ENCODE measurements at regions of chr10 and their contacts with region 1.

Region 1: DNA sequence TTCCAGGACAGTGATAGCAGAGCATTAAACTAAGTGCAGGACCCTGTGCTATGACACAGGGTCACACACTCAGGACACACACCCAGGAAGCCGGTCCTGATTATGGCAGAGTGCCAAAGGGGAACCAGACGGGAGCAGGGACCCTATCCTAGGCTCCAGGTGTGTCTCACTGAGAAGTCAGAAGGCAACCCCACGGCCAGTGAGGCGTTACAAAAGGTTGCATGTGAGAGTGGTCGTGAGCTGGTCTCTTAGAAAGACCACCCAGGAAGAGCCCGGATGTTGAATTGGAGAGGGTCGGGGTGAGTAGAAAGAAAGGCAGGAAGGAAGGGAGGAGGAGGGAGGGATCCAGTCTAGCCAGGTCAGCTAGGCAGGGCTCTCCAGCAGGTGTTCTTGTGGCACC is 31.0 kb downstream of the FRMPD2 start:
- DNase-seq: no peak
- H3K4me3 ChIP-seq: no peak overlapping the region
- H3K27ac ChIP-seq: no peak overlapping the region
- H3K4me1 ChIP-seq: no peaks in the 10 kb centered on the region
- H3K27me3 ChIP-seq: no peaks in the 10 kb centered on the region
- CTCF ChIP-seq: no peak

Region 2: DNA sequence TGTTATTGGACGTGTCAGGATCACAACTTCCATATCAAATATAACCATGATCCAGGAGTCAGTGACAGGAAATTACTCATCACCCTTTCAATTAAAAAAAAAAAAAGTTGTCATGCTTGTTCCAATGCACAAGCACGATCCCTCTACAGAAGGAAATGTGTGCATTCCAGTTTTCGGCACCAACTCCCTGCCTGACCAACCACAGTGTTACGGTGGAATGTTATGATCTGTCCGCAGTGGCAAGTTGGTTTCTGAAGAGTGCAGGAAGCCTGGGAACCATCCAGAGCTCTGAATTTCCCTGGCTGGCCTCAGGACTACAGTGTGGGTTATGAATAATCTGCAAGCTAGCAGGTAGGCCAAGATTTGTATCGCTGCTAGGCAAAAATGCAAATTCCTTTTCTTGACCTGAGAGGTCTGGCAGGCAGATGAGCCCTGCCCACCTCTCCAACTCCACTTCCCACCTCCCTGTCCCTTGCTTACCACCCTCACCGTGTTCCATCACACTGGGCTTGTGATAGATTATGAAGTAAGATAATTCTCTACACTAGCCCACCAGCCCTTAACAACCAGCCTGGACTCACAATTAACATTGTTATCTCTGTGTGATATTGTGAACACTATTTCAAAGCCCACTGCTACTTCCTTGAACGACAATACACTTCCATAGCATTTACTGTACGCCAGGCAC is 10.6 kb after region 1 on chr10:
- CTCF ChIA-PET with region 1: no interaction called
- dilution Hi-C with region 1: no loop called
- in situ Hi-C with region 1: no loop called
- intact Hi-C with region 1: no loop called
- DNase-seq: peak; percentile 97
- H3K4me3 ChIP-seq: no peak overlapping the region
- H3K27ac ChIP-seq: peak overlapping the region; percentile 42
- H3K4me1 ChIP-seq: peaks cover 41% of the 10 kb centered on the region
- H3K27me3 ChIP-seq: no peaks in the 10 kb centered on the region
- CTCF ChIP-seq: no peak

Region 3: GRCh38 chr10:48300556-48300955 is 57.1 kb after region 1 on chr10:
- CTCF ChIA-PET with region 1: no interaction called
- dilution Hi-C with region 1: loop called (anchors 5 kb)
- in situ Hi-C with region 1: no loop called
- intact Hi-C with region 1: no loop called
- DNase-seq: no peak
- H3K4me3 ChIP-seq: no peak overlapping the region
- H3K27ac ChIP-seq: no peak overlapping the region
- H3K4me1 ChIP-seq: no peaks in the 10 kb centered on the region
- H3K27me3 ChIP-seq: peaks cover 2% of the 10 kb centered on the region
- CTCF ChIP-seq: no peak

Region 4: GRCh38 chr10:48463318-48464003 is 220.0 kb after region 1 on chr10:
- CTCF ChIA-PET with region 1: no interaction called
- dilution Hi-C with region 1: no loop called
- in situ Hi-C with region 1: no loop called
- intact Hi-C with region 1: no loop called
- DNase-seq: no peak
- H3K4me3 ChIP-seq: no peak overlapping the region
- H3K27ac ChIP-seq: no peak overlapping the region
- H3K4me1 ChIP-seq: peaks cover 23% of the 10 kb centered on the region
- H3K27me3 ChIP-seq: no peaks in the 10 kb centered on the region
- CTCF ChIP-seq: no peak

Region 5: GRCh38 chr10:48533951-48534720 is 290.6 kb after region 1 on chr10:
- CTCF ChIA-PET with region 1: no interaction called
- dilution Hi-C with region 1: no loop called
- in situ Hi-C with region 1: no loop called
- intact Hi-C with region 1: no loop called
- DNase-seq: no peak
- H3K4me3 ChIP-seq: no peak overlapping the region
- H3K27ac ChIP-seq: no peak overlapping the region
- H3K4me1 ChIP-seq: no peaks in the 10 kb centered on the region
- H3K27me3 ChIP-seq: no peaks in the 10 kb centered on the region
- CTCF ChIP-seq: no peak